K562 (cell line): ENCODE measurements at regions of chr16 and their contacts with region 1.

Region 1: DNA sequence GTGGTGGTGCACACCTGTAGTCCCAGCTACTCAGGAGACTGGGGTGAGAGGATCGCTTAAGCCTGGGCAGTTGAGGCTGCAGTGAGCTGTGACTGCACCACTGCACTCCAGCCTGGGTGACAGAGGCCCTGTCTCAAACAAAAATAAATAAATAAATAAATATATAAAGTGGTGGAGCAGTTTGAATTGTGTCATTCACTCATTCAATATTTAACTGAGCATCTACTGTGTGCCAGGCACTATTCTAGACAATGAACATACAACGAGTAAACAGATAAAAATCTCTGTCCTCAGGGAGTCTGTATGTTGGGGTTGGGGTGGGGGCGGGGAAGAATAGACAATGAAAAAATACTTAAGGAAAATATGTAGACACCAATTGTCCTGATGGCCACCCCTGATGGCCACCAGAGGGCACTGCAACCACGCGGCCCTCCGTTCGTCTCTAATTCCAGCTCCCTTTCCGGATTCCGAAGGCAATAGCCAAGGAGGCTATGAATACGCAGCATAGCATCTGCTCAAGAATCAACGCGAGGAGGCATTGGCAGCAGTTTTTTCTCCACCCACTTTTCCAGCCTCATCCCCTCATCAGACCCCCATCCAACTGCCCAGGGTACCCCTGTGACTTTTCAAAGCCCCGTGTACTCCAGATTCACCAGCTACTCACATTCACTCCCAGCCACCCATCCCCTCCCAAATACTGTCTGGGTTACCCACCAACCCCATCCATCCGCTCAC is 21.4 kb downstream of the QPRT start:
- DNase-seq: peak; percentile 83 to 91 (median 84)
- ATAC-seq: peak; percentile 89
- H3K4me3 ChIP-seq: no peak overlapping the region
- H3K27ac ChIP-seq: no peak overlapping the region
- H3K4me1 ChIP-seq: peaks cover 24% of the 10 kb centered on the region in 2 experiments
- H3K27me3 ChIP-seq: no peaks in the 10 kb centered on the region
- CTCF ChIP-seq: peak; percentile 88 to 95 (median 93)
- EP300 ChIP-seq: no peak
- POLR2A ChIP-seq: no peak
- RAD21 ChIP-seq: peak; percentile 68 to 89

Region 2: GRCh38 chr16:29686740-29687332 is 13.6 kb before region 1 on chr16:
- CTCF ChIA-PET with region 1: interaction called, 3 read pairs
- POLR2A ChIA-PET with region 1: interaction called, 13 read pairs
- in situ Hi-C with region 1: no loop called
- intact Hi-C with region 1: no loop called
- DNase-seq: no peak
- ATAC-seq: no peak; the same call in 2 of the 3 replicates
- H3K4me3 ChIP-seq: no peak overlapping the region
- H3K27ac ChIP-seq: no peak overlapping the region
- H3K4me1 ChIP-seq: peaks cover 15 to 35% of the 10 kb centered on the region in 2 experiments
- H3K27me3 ChIP-seq: no peaks in the 10 kb centered on the region
- CTCF ChIP-seq: no peak
- EP300 ChIP-seq: no peak
- POLR2A ChIP-seq: no peak
- RAD21 ChIP-seq: no peak

Region 3: DNA sequence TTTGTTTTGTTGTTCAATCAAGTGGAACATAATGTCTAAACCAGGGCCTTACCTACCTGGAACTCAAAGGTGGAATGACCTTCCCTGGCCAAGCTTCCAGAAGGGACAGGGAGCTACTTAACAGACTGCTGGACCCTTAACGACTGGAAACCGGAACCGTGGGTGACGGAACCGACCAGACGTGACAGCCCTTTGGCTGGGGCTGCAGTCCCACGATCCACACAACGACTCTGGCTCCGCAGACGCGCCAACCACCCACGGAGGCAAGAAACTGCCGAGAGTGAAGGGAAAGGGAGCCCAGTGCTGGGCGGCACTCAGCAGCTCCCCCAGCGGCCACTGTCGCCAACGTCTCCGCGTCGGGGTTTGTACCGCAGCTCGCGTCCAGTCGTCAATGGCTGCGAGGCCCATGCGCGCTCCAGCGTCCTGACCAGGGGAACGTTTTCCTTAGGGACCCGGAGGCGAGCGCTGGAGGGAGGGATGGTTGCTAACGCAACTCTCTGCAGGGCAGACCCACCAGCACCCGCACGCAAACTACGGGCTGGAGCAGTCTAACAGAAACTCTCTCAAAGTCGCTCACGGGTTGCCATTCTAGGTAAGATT is 84.6 kb after region 1 on chr16:
- CTCF ChIA-PET with region 1: no interaction called
- POLR2A ChIA-PET with region 1: interaction called, 3 read pairs
- in situ Hi-C with region 1: no loop called
- intact Hi-C with region 1: loop called (anchors 10 kb)
- DNase-seq: peak; percentile 75 to 86 (median 78)
- ATAC-seq: peak; percentile 98
- H3K4me3 ChIP-seq: no peak overlapping the region
- H3K27ac ChIP-seq: no peak overlapping the region
- H3K4me1 ChIP-seq: peaks cover 8 to 12% of the 10 kb centered on the region in 2 experiments; a peak in 4 of 5 replicates
- H3K27me3 ChIP-seq: peaks cover 10% of the 10 kb centered on the region in 2 experiments
- CTCF ChIP-seq: peak; percentile 80 to 91 (median 88)
- EP300 ChIP-seq: no peak
- POLR2A ChIP-seq: no peak
- RAD21 ChIP-seq: peak in 1 of 2 experiments; percentile 49; a peak in 2 of 4 replicates

Region 4: GRCh38 chr16:29815793-29816693 is 115.6 kb after region 1 on chr16 and contains the start of gene PAGR1:
- CTCF ChIA-PET with region 1: interaction called, 5 read pairs
- POLR2A ChIA-PET with region 1: interaction called, 3 read pairs
- in situ Hi-C with region 1: no loop called
- intact Hi-C with region 1: loop called (anchors 5 kb)
- DNase-seq: peak; percentile 91 to 99 (median 93)
- ATAC-seq: peak; percentile 81
- H3K4me3 ChIP-seq: peak within 1 kb of the TSS; percentile 68
- H3K27ac ChIP-seq: peak within 1 kb of the TSS; percentile 71
- H3K4me1 ChIP-seq: peaks cover 28 to 73% of the 10 kb centered on the region in 2 experiments
- H3K27me3 ChIP-seq: no peaks in the 10 kb centered on the region
- CTCF ChIP-seq: peak; percentile 87 to 93 (median 90)
- EP300 ChIP-seq: no peak
- POLR2A ChIP-seq: peak; percentile 89
- RAD21 ChIP-seq: peak; percentile 78 to 79
- polyA plus RNA-seq, gene PAGR1: 1.4 to 4.5 TPM

Region 5: DNA sequence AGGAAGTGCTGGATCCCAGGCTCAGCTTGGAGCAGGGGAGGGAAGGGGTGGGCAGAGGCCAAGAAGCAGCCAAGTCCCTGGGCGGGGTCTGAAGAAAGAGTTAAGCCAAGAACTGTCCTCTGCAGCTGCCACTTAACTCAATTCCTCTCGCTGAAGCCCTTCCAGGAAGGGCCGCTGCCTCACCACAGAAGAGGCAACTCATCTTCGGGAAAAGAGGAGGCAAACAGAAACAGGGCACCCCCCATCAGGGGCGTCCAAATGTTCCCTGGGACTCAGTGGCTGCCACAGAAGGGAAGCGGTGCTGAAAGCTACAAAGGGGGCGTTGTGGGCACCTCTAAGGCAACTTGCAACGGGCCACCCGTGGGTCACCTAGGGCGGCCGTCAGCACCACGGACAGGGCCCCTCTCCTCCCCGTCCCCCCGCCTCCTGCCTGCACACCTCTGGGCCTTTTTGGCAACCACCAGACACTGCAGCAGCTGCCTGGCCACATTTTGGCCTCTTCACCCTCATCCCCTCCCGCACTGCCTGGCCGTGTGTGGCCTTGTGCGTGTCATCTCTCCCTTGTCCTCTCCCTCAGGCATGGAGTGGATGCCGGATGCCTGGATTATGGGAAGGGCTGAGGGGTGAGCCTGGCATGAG is 328.1 kb after region 1 on chr16:
- CTCF ChIA-PET with region 1: no interaction called
- POLR2A ChIA-PET with region 1: no interaction called
- in situ Hi-C with region 1: loop called (anchors 10 kb)
- intact Hi-C with region 1: loop called (anchors 5 kb)
- DNase-seq: peak; percentile 55 to 82 (median 68)
- ATAC-seq: peak; percentile 82
- H3K4me3 ChIP-seq: no peak overlapping the region
- H3K27ac ChIP-seq: no peak overlapping the region
- H3K4me1 ChIP-seq: peaks cover 0 to 31% of the 10 kb centered on the region in 2 experiments; a peak in 2 of 5 replicates
- H3K27me3 ChIP-seq: peaks cover 17 to 72% of the 10 kb centered on the region in 2 experiments; a peak in 4 of 5 replicates
- CTCF ChIP-seq: no peak
- EP300 ChIP-seq: no peak
- POLR2A ChIP-seq: no peak
- RAD21 ChIP-seq: no peak